ENCODE measurements at regions of chr17 and their contacts with region 1.

Region 1: GRCh38 chr17:72306037-72306436 is 185.2 kb downstream of the SOX9 start:
- DNase-seq: no peak
- CTCF ChIP-seq: no peak

Region 2: DNA sequence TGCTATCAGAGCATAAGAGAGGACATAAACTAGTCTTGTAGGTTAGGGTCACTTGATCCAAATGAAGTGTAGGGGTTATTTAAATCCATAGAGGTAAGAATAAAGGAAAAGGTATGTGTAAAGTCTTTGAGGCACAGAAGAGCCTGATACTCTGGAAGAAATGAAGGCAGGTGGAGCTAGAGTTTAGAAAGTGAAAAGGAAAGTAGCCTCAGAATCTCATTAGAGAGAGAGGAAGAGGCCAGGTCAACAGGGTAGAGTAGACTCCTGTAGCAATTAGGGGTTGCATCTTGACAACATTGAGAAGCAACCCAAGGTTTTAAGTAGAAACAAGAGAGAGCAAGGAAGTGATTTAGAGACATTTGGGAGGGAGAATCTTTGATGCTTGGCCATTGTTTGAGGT is 420.4 kb before region 1 on chr17:
- in situ Hi-C with region 1: no loop called
- DNase-seq: no peak
- CTCF ChIP-seq: no peak

Region 3: DNA sequence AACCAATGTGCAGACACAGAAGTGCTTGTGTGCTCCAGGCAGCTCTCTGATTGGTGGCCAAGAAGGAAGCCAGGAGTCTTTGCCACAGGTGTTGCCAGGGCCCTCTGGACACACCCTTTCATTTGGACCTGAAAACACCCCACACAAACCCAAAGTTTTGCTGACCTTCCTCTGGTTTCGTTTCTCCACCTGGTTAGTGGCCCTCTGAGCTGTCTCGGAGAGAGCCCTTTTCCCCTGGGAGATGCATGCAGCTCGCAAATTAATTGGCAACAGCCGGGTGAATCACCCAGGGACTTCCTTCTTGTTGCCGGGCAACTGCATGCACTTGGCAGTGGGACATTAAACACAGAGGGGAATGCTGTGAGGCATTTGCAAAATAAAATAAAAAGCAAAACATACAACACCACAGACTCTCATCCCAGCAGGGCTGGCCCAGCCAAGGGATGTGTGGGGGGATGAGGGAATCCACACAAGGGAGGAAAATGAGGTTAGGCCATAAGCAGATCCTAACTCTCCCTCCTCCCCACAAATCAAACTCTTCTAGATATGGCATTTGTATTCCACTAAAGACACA is 101.4 kb after region 1 on chr17:
- in situ Hi-C with region 1: loop called (anchors 25 kb)
- DNase-seq: peak; percentile 58
- CTCF ChIP-seq: no peak

Region 4: DNA sequence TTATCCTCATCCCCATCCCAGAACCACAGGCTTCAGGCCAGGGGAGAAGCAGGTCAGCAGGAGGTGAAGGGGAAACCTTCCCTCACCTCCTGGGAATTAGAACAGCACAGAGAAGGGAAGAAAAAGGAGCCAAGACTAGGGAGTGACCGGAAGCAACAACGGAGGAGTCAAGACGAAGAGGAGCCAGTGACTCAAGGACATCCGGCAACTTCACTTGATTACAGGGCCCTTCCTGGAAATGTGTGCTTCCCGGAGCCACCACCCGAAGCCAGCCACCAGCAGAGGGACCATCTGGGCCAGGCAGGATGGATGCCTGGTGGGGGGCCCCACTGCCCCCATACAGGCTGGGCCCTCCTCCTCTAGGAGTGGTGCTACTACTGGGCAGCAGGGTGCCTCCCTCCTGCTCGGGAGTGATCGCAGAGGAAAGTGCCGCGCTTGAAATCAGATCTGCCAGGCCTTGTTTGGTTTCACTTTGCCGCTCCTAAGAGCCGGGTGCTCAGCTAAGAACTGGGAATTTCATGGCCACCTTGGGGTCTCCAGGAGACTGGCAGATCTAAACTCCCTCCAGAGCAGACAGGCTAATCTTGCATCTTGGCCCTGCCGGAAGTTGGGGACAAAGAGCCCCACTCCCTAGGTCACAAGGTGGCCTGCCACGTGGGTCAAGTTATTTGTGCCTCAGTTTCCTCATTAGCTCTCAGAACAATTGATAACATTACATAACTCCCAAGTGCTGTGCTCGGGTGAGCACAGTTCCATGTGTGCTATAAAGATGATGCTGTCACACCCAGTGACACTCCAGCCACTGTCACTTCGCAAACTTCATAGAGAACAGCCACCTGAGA is 999.2 kb after region 1 on chr17:
- in situ Hi-C with region 1: no loop called
- DNase-seq: no peak
- CTCF ChIP-seq: no peak

Measured in GM13977 (cell line).